ENCODE measurements at regions of chr19 and their contacts with region 1.

Region 1: GRCh38 chr19:53906211-53907192 is 2.6 kb upstream of the CACNG7 start:
- DNase-seq: peak; percentile 42 to 82 (median 62)
- ATAC-seq: peak; percentile 58
- H3K4me3 ChIP-seq: no peak overlapping the region
- H3K4me3 Mint-ChIP-seq: no peak overlapping the region
- H3K27ac ChIP-seq: no peak overlapping the region
- H3K27ac Mint-ChIP-seq: no peak overlapping the region
- H3K4me1 ChIP-seq: peaks cover 34% of the 10 kb centered on the region
- H3K4me1 Mint-ChIP-seq: peaks cover 28% of the 10 kb centered on the region
- H3K27me3 ChIP-seq: peaks cover 57 to 62% of the 10 kb centered on the region in 2 experiments
- H3K27me3 Mint-ChIP-seq: peaks cover 96% of the 10 kb centered on the region
- CTCF ChIP-seq: peak; percentile 78

Region 2: GRCh38 chr19:53927739-53928138 is 21.2 kb after region 1 on chr19:
- CTCF ChIA-PET with region 1: no interaction called
- POLR2A ChIA-PET with region 1: no interaction called
- intact Hi-C with region 1: loop called in 1 of 2 experiments (anchors 2 kb)
- DNase-seq: peak in 10 of 14 experiments; percentile 17 to 69 (median 31)
- ATAC-seq: no peak
- H3K4me3 ChIP-seq: no peak overlapping the region
- H3K4me3 Mint-ChIP-seq: no peak overlapping the region
- H3K27ac ChIP-seq: no peak overlapping the region
- H3K27ac Mint-ChIP-seq: no peak overlapping the region
- H3K4me1 ChIP-seq: no peaks in the 10 kb centered on the region
- H3K4me1 Mint-ChIP-seq: no peaks in the 10 kb centered on the region
- H3K27me3 ChIP-seq: no peaks in the 10 kb centered on the region
- H3K27me3 Mint-ChIP-seq: peaks cover 21% of the 10 kb centered on the region
- CTCF ChIP-seq: no peak

Region 3: DNA sequence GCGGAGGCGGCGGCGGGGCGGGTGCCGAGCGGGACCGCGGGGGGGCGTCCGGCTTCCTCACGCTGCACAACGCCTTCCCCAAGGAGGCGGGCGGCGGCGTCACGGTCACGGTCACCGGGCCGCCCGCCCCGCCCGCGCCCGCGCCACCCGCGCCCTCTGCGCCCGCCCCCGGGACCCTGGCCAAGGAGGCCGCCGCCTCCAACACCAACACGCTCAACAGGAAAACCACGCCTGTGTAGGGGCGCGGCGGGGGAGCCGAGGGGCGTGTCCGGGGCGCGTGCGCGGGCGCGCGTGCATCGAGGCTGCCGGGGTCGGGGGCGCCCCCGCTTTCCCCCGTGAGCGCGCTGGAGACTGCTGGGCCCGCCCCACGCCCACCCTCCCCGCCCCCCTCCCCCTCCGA is 76.1 kb after region 1 on chr19:
- CTCF ChIA-PET with region 1: no interaction called
- POLR2A ChIA-PET with region 1: no interaction called
- intact Hi-C with region 1: loop called in 1 of 2 experiments (anchors 5 kb)
- DNase-seq: peak in 6 of 14 experiments; percentile 5 to 41 (median 18)
- ATAC-seq: no peak
- H3K4me3 ChIP-seq: no peak overlapping the region
- H3K4me3 Mint-ChIP-seq: no peak overlapping the region
- H3K27ac ChIP-seq: no peak overlapping the region
- H3K27ac Mint-ChIP-seq: no peak overlapping the region
- H3K4me1 ChIP-seq: peaks cover 29% of the 10 kb centered on the region
- H3K4me1 Mint-ChIP-seq: peaks cover 34% of the 10 kb centered on the region
- H3K27me3 ChIP-seq: peaks cover 53 to 58% of the 10 kb centered on the region in 2 experiments
- H3K27me3 Mint-ChIP-seq: peaks cover 41% of the 10 kb centered on the region
- CTCF ChIP-seq: no peak

Measured in CD4-positive, alpha-beta T cell (primary cell).